ENCODE measurements at regions of chr5 and their contacts with region 1.

Region 1: DNA sequence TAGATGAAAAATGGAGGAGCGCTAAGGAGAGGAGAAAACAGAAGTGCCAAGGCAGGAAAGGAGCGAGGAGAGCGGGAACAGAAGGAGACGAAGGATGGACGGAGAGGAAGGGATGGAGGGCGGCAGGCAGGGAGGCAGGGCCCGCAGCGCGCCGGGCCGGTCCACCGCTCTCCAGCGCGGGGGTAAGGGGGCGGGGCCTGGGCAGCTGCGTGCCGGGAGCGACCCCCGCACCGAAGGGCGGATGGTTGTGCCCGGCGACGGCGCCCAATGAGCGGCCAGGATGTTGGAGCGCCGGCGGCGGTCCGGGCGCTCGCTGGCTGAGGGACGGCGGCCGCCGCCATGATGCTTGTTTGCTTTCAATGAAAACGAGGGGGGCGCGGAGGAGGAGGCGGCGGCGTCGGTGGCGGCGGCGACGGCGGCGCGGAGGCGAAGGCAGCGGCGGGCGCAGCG is at the start of gene CNOT6:
- DNase-seq: peak; percentile 89 to 95 (median 95)
- H3K4me3 ChIP-seq: peak within 1 kb of the TSS; percentile 59 to 89 (median 83)
- H3K4me3 Mint-ChIP-seq: peak within 1 kb of the TSS; percentile 95 to 97
- H3K27ac ChIP-seq: peak within 1 kb of the TSS; percentile 66 to 84
- H3K27ac Mint-ChIP-seq: peak within 1 kb of the TSS; percentile 78 to 94 (median 91)
- H3K4me1 ChIP-seq: peaks cover 18 to 20% of the 10 kb centered on the region in 2 donors
- H3K4me1 Mint-ChIP-seq: peaks cover 27% of the 10 kb centered on the region
- H3K27me3 ChIP-seq: no peaks in the 10 kb centered on the region
- H3K27me3 Mint-ChIP-seq: peaks cover 0 to 2% (median 0%) of the 10 kb centered on the region in 3 donors
- CTCF ChIP-seq: no peak
- polyA plus RNA-seq, gene CNOT6: 4.8 to 9.5 (median 7.7) TPM

Region 2: DNA sequence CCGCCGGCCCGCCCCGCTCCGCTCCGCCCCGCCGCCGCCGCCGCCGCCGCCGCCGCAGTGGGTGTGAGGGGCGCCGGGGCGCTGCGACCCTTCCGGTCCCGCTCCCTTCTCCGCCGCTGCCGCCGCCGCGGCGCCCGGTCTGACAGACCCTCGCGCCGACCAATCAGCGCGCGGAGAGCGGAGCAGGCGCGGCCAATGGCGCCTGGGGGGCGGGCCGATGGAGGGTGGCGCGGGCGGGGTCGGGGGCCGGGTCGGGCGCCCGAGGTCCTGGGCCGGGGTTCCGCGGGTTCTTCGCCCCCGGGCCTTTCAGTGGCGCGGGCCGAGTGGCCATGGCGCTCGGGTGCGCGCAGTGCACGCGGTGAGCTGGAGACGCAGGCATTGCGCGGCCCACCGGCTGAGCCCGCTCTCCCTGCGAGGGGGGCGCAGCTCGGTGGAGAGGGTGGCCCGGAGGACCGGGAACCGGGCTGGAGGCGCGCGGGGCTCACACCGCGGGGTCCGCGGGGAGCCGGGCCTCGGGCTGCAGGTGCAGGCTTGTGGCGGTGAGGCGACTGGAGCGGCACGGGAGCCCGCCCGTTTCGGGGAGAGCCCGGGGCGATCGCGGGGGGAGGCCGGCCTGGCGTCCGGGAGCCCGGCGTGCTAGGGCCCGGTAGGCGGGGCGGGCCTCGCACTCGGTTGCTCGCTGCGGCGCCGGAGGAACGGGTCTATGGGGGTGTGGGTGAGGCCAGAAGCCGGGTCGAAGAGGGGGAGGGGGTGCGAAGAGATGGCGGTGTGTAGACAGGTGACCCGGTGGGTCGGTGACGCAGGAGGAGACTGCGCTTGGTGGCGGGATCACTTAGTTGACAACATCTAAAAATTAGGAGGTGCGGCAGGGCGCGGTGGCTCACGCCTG is 201.9 kb before region 1 on chr5 and contains the start of gene MAPK9:
- intact Hi-C with region 1: loop called (anchors 10 kb)
- DNase-seq: peak; percentile 68 to 80 (median 75)
- H3K4me3 ChIP-seq: peak within 1 kb of the TSS; percentile 53 to 90 (median 79)
- H3K4me3 Mint-ChIP-seq: peak within 1 kb of the TSS; percentile 92 to 93
- H3K27ac ChIP-seq: peak within 1 kb of the TSS; percentile 50 to 76
- H3K27ac Mint-ChIP-seq: peak within 1 kb of the TSS; percentile 60 to 94 (median 92)
- H3K4me1 ChIP-seq: peaks cover 27 to 44% of the 10 kb centered on the region in 2 donors
- H3K4me1 Mint-ChIP-seq: peaks cover 51% of the 10 kb centered on the region
- H3K27me3 ChIP-seq: no peaks in the 10 kb centered on the region
- H3K27me3 Mint-ChIP-seq: peaks cover 1 to 2% (median 2%) of the 10 kb centered on the region in 3 donors
- CTCF ChIP-seq: no peak
- polyA plus RNA-seq, gene MAPK9: 9.7 to 19.6 (median 16.2) TPM

Region 3: GRCh38 chr5:180424094-180424493 is 70.0 kb before region 1 on chr5:
- intact Hi-C with region 1: no loop called
- DNase-seq: no peak
- H3K4me3 ChIP-seq: no peak overlapping the region
- H3K4me3 Mint-ChIP-seq: no peak overlapping the region
- H3K27ac ChIP-seq: no peak overlapping the region
- H3K27ac Mint-ChIP-seq: peak overlapping the region in 1 of 7 donors; percentile 25
- H3K4me1 ChIP-seq: no peaks in the 10 kb centered on the region
- H3K4me1 Mint-ChIP-seq: no peaks in the 10 kb centered on the region
- H3K27me3 ChIP-seq: peaks cover 0 to 2% of the 10 kb centered on the region in 2 donors
- H3K27me3 Mint-ChIP-seq: peaks cover 3 to 10% (median 6%) of the 10 kb centered on the region in 3 donors
- CTCF ChIP-seq: no peak

Region 4: GRCh38 chr5:181243512-181244343 is 749.6 kb after region 1 on chr5 and contains the start of gene RACK1:
- intact Hi-C with region 1: loop called in 1 of 2 experiments (anchors 10 kb)
- DNase-seq: peak; percentile 82 to 87 (median 84)
- H3K4me3 ChIP-seq: peak within 1 kb of the TSS; percentile 93 to 96 (median 93)
- H3K4me3 Mint-ChIP-seq: peak within 1 kb of the TSS; percentile 95 to 97
- H3K27ac ChIP-seq: peak within 1 kb of the TSS; percentile 90 to 95
- H3K27ac Mint-ChIP-seq: peak within 1 kb of the TSS; percentile 97 to 99 (median 98)
- H3K4me1 ChIP-seq: peaks cover 53 to 63% of the 10 kb centered on the region in 2 donors
- H3K4me1 Mint-ChIP-seq: peaks cover 53% of the 10 kb centered on the region
- H3K27me3 ChIP-seq: no peaks in the 10 kb centered on the region
- H3K27me3 Mint-ChIP-seq: peaks cover 0 to 2% (median 0%) of the 10 kb centered on the region in 3 donors
- CTCF ChIP-seq: no peak
- polyA plus RNA-seq, gene RACK1: 1,150 to 2,356 (median 1,195) TPM

Measured in CD14-positive monocyte (primary cell).